ENCODE measurements at regions of chr12 and their contacts with region 1.

Region 1: DNA sequence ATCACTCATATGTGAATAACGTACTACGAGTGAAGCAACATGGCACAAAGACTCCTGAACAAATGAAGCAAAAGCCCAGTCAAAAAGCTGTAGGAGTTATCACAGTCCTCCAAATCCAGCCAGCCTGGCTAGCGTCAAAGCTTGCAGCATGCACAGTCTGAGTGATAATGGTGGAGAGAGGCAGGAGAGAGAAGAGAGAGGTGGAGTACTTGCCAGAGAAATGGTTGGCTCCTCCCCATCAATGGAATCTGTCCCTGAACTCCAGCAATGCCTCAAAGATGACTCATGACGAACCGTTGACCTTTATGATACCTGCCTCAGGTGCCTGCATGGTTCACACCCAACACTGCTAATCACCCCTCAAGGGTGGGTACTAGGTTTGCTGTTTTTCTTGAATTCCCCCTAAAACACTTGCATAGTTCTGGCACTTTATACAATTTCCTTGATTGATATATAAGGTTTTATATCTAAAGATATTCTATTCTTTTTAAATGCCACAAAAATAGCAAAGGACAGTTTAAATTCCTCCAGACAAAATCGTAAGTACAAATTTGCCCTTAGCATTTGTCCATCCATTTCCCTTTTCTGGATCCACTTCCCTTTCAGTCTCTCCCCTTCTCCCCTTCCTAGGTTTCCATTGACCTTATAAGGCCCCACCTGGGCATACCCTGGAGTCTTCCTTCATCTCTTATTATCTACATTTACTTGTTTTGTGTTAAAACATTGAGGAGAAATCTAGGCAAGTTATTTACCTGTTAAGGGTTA is 10.2 kb downstream of the ARHGDIB start:
- DNase-seq: peak; percentile 81 to 90
- H3K4me3 ChIP-seq: no peak overlapping the region
- H3K4me3 Mint-ChIP-seq: peak overlapping the region; percentile 6
- H3K27ac Mint-ChIP-seq: peak overlapping the region; percentile 55
- H3K4me1 ChIP-seq: peaks cover 55% of the 10 kb centered on the region
- H3K4me1 Mint-ChIP-seq: peaks cover 41% of the 10 kb centered on the region
- H3K27me3 ChIP-seq: no peaks in the 10 kb centered on the region
- H3K27me3 Mint-ChIP-seq: no peaks in the 10 kb centered on the region
- CTCF ChIP-seq: no peak

Region 2: DNA sequence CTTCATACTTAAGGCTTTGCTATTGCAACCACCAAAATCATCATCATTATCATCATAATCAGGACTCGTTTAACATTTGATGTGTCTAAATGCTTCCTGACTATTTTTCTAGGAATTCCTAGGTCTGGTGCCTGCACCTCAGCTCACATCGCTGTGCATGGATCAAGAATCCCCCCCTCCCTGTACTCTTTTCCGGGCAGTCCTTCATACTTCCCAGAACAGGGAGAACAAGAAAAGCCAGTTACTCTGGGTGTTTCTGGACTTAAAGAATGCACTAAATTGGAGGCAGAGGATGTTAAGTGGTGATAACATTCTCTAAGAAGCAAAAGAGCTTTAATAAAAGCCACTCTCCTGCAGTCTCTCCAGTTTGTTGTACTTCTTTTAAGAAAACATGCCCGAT is 22.2 kb before region 1 on chr12:
- CTCF ChIA-PET with region 1: no interaction called
- POLR2A ChIA-PET with region 1: no interaction called
- intact Hi-C with region 1: loop called (anchors 1 kb)
- DNase-seq: peak; percentile 72 to 87
- H3K4me3 ChIP-seq: no peak overlapping the region
- H3K4me3 Mint-ChIP-seq: peak overlapping the region; percentile 71
- H3K27ac Mint-ChIP-seq: peak overlapping the region; percentile 51
- H3K4me1 ChIP-seq: peaks cover 51% of the 10 kb centered on the region
- H3K4me1 Mint-ChIP-seq: peaks cover 37% of the 10 kb centered on the region
- H3K27me3 ChIP-seq: no peaks in the 10 kb centered on the region
- H3K27me3 Mint-ChIP-seq: no peaks in the 10 kb centered on the region
- CTCF ChIP-seq: no peak

Region 3: DNA sequence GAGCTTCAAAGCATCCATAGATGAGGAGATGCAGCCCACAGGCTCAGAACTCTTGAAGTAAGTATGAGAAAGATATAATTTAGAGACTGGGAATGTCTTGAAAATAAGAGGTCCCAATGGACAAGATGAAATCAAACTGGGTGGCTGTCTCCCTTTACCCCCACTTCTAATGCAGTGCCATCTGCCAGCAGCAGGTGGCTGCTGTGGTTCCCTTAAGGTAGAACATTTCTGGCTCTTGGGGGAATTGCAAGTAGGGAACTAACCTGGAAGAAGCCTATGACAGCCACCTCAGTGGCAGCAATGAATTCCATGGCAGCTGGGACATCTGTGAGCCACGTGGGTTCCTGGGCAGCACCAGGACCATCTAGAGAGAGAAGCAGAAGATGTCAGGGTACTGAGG is 13.5 kb before region 1 on chr12:
- CTCF ChIA-PET with region 1: no interaction called
- POLR2A ChIA-PET with region 1: no interaction called
- intact Hi-C with region 1: loop called (anchors 2 kb)
- DNase-seq: peak in 1 of 2 experiments; percentile 41
- H3K4me3 ChIP-seq: no peak overlapping the region
- H3K4me3 Mint-ChIP-seq: no peak overlapping the region
- H3K27ac Mint-ChIP-seq: no peak overlapping the region
- H3K4me1 ChIP-seq: peaks cover 21% of the 10 kb centered on the region
- H3K4me1 Mint-ChIP-seq: peaks cover 23% of the 10 kb centered on the region
- H3K27me3 ChIP-seq: no peaks in the 10 kb centered on the region
- H3K27me3 Mint-ChIP-seq: no peaks in the 10 kb centered on the region
- CTCF ChIP-seq: peak; percentile 34 to 51

Measured in Caco-2 (cell line).